ENCODE measurements at regions of chr2 and their contacts with region 1.

Region 1: GRCh38 chr2:98727369-98728087 is 3.4 kb downstream of the MGAT4A start:
- DNase-seq: peak in 5 of 42 donors; percentile 36 to 64 (median 46)

Region 2: GRCh38 chr2:98654699-98655495 is 72.6 kb before region 1 on chr2:
- intact Hi-C with region 1: loop called (anchors 10 kb)
- DNase-seq: no peak

Region 3: DNA sequence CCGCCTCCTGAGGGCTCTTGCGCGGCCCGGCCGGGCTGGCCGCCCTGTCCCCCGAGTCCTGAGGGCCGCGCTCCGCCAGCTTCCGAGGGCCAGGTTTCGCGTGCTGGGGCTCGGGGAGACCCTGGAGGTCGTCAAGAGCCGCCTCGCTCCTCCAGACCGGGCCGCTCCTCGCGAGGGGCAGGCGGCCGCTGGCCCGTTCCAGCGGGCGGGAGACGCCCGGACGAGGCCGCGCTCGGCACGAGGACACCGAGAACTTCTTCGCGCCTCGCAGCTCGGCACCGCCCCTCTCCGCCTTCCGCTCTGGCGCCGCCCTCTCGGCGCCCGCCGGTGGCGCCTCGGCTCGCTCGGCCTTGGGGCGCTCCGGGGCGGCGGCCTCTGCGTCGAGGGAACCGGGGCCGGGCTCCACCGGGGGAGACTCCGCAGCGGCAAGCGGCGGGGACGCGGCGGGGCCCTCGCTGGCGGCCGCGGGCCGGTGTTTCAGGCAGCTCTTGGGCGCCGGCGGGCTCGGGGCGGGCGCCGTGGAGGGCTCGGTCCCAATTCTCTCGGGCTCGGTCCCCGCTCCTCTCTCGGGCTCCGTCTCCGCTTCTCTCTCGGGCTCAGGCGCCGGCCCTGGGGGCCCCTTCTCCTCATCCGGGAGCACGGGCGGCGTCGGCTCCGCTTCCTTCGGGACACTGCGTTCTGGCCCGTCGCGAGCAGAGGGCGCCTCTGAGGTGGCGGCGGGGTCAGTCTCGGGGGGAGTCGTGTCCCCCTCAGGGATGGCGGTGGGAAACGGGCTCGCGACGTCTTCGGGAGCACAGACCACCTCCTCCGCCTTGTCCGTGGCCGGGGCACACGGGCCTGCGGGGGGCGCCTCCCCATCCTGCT is 95.0 kb after region 1 on chr2:
- intact Hi-C with region 1: loop called (anchors 10 kb)
- DNase-seq: peak in 32 of 42 donors; percentile 32 to 77 (median 56)